T-cell (primary cell): ENCODE measurements at regions of chr16 and their contacts with region 1.

Region 1: GRCh38 chr16:75148311-75149195 is at the start of gene ZFP1:
- DNase-seq: peak; percentile 84 to 96 (median 92)
- ATAC-seq: peak; percentile 90 to 93 (median 91)
- H3K4me3 ChIP-seq: peak within 1 kb of the TSS; percentile 83 to 92
- H3K4me3 Mint-ChIP-seq: peak within 1 kb of the TSS; percentile 79 to 86 (median 82)
- H3K27ac ChIP-seq: peak within 1 kb of the TSS; percentile 80
- H3K27ac Mint-ChIP-seq: peak within 1 kb of the TSS; percentile 62 to 86
- H3K4me1 ChIP-seq: peaks cover 5 to 10% of the 10 kb centered on the region in 2 experiments
- H3K4me1 Mint-ChIP-seq: peaks cover 17 to 23% (median 22%) of the 10 kb centered on the region in 3 donors
- H3K27me3 ChIP-seq: no peaks in the 10 kb centered on the region
- H3K27me3 Mint-ChIP-seq: no peaks in the 10 kb centered on the region
- total RNA-seq, gene ZFP1: 10.1 to 15.6 (median 14.4) TPM

Region 2: DNA sequence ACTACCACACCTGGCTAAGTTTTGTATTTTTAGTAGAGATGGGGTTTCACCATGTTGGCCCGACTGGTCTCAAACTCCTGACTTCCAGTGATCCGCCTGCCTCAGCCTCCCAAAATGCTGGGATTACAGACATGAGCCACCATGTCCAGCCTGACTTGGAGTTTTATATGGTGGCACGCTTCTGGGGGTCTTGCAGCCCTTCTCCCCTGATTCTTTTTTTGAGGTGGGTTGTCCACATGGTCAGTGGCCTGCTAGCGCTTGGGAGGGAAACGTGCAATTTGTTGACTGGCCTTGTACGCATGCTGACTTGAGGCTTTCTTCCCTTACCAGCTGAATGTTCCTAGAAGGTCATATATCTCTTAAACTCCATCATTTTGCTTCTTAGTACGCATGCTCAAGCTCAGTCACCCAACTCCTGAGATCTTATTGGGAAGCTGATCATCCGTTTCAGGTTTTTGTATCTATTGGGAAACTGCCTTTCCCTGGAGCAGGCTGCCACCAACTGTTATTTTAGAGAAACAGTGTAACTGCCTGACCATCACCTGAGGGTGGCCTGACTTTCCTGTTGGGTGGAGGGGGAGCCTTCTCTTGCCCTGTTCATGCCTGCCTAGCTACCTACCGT is 18.3 kb before region 1 on chr16:
- CTCF ChIA-PET with region 1: interaction called in 1 of 2 experiments, 19 read pairs
- POLR2A ChIA-PET with region 1: no interaction called
- DNase-seq: no peak
- ATAC-seq: no peak
- H3K4me3 ChIP-seq: no peak overlapping the region
- H3K4me3 Mint-ChIP-seq: no peak overlapping the region
- H3K27ac ChIP-seq: no peak overlapping the region
- H3K27ac Mint-ChIP-seq: no peak overlapping the region
- H3K4me1 ChIP-seq: peaks cover 0 to 3% of the 10 kb centered on the region in 2 experiments
- H3K4me1 Mint-ChIP-seq: peaks cover 9 to 22% (median 11%) of the 10 kb centered on the region in 3 donors
- H3K27me3 ChIP-seq: peaks cover 0 to 5% of the 10 kb centered on the region in 2 experiments
- H3K27me3 Mint-ChIP-seq: peaks cover 4 to 7% of the 10 kb centered on the region in 2 donors